PC-3 (cell line): ENCODE measurements at regions of chrX and their contacts with region 1.

Region 1: DNA sequence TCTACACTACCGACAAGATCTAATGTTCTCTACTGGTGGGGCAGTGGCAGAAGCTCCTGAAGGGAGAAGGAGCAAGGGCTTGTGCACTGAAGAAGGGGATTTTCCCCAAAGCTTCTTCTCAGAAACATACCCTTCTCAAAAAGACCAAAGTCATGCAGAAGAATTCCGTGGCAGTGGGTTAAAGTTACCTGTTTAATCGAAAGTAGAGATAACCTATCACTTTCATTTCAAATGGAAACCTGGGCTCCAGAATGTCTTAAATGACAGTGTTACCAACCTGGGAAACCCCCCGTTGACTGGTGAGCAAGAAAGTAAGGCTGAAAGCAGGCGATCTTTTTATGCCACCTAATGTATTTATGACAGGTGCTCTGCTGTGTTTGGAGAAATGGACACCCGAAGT is 92.5 kb upstream of the TEX13D start:
- DNase-seq: no peak
- ATAC-seq: no peak
- H3K4me3 ChIP-seq: no peak overlapping the region
- H3K27ac ChIP-seq: no peak overlapping the region
- H3K4me1 ChIP-seq: peaks cover 10% of the 10 kb centered on the region
- H3K27me3 ChIP-seq: no peaks in the 10 kb centered on the region
- CTCF ChIP-seq: no peak

Region 2: GRCh38 chrX:124293810-124294209 is 53.9 kb after region 1 on chrX:
- CTCF ChIA-PET with region 1: no interaction called
- POLR2A ChIA-PET with region 1: no interaction called
- intact Hi-C with region 1: loop called (anchors 2 kb)
- DNase-seq: peak; percentile 75
- ATAC-seq: peak; percentile 96
- H3K4me3 ChIP-seq: no peak overlapping the region
- H3K27ac ChIP-seq: peak overlapping the region; percentile 64
- H3K4me1 ChIP-seq: peaks cover 15% of the 10 kb centered on the region
- H3K27me3 ChIP-seq: no peaks in the 10 kb centered on the region
- CTCF ChIP-seq: no peak

Region 3: DNA sequence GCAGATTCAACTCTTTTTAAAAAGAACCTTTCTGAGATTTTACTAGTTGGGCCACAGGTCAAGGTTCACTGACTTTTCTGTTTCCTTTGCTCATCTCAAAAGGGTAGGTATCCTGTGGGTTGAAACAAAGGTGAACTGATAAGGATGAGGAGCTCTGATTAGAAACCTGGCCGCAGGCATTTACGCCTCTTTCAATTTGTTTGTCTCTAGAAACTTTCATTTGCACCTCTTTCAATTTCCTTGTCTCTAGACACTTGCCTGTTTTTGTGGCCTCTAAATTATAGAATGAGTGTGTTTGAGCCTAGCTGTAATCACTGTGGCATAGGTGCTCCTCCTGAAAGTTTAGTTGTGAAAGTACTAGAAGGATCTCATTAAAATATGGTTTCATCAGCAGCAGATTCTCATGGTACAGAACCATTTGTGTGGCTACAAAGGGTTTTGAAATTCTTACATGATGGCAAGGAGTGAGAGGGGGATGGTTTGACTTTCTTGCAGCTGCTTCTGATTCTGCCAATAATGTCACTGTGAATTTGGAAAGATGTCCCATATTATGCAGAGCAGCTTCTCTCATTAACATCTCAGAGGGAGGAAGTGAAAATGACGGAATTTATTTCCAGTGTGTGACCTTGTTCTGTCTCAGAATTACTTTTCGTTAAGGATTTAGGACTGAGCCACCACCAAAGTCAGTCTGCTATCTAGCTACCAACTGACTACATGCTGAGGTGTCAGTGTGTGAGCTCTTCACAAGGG is 248.7 kb after region 1 on chrX:
- CTCF ChIA-PET with region 1: no interaction called
- POLR2A ChIA-PET with region 1: no interaction called
- intact Hi-C with region 1: no loop called
- DNase-seq: no peak
- ATAC-seq: no peak
- H3K4me3 ChIP-seq: no peak overlapping the region
- H3K27ac ChIP-seq: no peak overlapping the region
- H3K4me1 ChIP-seq: no peaks in the 10 kb centered on the region
- H3K27me3 ChIP-seq: no peaks in the 10 kb centered on the region
- CTCF ChIP-seq: no peak